ENCODE measurements at regions of chr11 and their contacts with region 1.

Region 1: DNA sequence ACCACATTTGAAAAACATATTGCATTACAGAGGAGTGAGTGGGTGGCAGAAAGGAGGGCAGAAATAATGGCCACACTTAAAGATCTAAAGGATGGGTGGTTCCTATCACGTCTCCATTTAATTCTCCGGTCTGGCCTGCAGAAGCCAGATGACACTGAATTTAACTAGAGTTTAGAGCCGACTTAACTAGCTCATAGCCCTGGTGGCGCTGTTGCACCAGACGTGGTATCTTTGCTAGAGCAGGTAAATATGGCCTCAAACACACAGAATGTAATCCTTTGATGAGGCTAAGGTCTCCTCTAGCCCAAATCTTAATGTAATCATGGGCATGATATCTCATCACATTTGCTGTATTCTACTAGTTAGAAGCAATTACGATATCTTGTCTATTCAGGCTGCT is 51.5 kb upstream of the GAL start:
- DNase-seq: peak; percentile 60
- H3K4me3 ChIP-seq: no peak overlapping the region
- CTCF ChIP-seq: peak; percentile 78

Region 2: GRCh38 chr11:68684385-68685356 is 51.9 kb after region 1 on chr11 and contains the start of gene GAL:
- in situ Hi-C with region 1: no loop called
- DNase-seq: no peak
- H3K4me3 ChIP-seq: no peak within 1 kb of the TSS
- CTCF ChIP-seq: no peak

Region 3: GRCh38 chr11:68903288-68904247 is 270.8 kb after region 1 on chr11 and contains the starts of genes IGHMBP2 and MRPL21:
- in situ Hi-C with region 1: loop called (anchors 25 kb)
- DNase-seq: peak; percentile 59
- H3K4me3 ChIP-seq: peak within 1 kb of the TSS; percentile 89
- CTCF ChIP-seq: no peak

Region 4: DNA sequence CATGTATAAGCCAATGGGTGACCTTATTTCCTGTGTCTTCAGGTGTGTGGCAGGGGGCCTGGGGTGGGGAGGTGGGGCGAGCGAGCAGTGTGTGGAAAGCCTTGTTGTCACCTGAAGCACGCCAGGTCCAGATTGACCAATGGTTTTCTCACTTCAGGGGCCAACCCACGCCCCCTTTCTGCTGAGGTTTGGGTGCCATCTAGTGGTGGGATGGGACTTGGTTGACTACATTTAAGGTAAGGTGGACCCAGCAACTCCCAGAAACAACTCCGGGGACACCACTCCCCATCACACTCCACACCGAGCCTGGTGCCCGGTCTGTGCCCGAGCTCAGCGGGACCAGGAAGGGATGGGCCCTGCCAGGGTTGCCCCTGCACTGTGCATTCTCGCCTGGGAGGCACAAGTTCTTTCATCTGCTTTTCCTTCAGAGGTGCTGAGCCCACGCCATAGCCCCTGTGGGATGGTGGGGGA is 455.9 kb after region 1 on chr11:
- in situ Hi-C with region 1: loop called (anchors 25 kb)
- DNase-seq: peak; percentile 71
- H3K4me3 ChIP-seq: no peak overlapping the region
- CTCF ChIP-seq: peak; percentile 79